HCT116 (cell line): ENCODE measurements at regions of chr2 and their contacts with region 1.

Region 1: DNA sequence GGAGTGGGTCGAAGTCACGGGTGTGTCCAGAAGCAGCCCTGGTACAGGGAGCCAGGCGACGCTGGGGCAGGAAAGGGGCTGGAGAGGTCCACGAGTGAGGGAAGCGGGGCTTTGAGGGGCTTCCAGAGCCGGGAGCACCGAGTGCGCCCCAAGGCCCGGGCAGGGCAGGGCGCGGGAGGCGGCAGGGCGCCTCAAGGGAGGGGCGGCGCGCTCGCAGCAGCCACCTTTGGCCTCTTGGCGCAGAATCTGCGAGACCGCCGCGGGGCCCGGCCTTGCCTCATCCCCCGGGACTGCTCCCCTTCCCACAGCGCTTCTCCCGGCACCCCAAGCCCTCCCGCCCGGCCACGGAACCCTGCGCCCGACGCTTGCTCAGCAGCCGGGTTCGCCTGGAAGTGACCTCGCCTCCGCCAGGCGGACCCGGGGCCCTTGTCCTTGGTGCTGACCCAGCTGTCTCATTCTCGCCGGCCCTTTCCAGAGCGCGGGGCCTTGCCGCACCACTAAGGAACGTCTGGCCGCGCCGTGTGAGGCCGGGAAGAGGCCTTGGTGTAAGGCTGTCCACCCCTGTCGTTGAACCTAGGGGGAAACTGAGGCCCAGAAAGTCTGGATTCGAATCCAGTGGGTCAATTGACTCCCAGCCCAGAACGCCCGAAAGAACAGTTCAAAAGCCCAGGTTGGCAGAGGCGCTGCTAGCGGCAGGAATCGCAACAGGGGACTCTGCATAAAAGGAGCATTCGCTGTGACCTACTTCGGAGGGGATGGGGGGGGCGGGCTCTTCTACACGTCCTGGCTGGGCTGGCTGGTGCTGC is 584 bp upstream of the DNER start:
- DNase-seq: no peak
- ATAC-seq: peak; percentile 50
- H3K4me3 ChIP-seq: peak overlapping the region; percentile 19 to 33; a peak in 3 of 4 replicates
- H3K27ac ChIP-seq: no peak overlapping the region
- H3K4me1 ChIP-seq: peaks cover 0 to 11% of the 10 kb centered on the region in 2 experiments; a peak in 2 of 4 replicates
- H3K27me3 ChIP-seq: peaks cover 25% of the 10 kb centered on the region
- CTCF ChIP-seq: no peak
- POLR2A ChIP-seq: no peak
- RAD21 ChIP-seq: no peak

Region 2: DNA sequence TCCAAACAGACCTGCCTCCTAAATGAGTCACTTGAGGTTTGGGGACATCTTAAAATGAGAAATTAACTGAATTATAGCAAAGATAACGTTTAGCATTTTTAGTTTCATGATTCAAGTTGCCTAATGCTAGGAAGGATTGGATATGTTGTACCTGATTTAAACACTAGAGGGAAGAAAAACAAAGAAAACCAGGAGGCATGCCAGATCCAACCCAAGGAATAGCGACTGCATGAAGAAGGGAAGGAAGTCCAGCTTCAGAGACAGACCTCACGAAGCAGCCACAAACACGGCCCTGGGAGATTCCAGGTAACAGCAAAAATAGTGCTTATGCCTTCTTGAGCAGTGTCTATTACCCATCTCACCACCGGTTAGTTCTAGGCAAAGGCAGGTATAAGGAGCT is 1033.5 kb before region 1 on chr2:
- CTCF ChIA-PET with region 1: no interaction called
- POLR2A ChIA-PET with region 1: no interaction called
- RAD21 ChIA-PET with region 1: no interaction called
- intact Hi-C with region 1: loop called (anchors 5 kb)
- DNase-seq: peak; percentile 34
- ATAC-seq: peak; percentile 87
- H3K4me3 ChIP-seq: no peak overlapping the region
- H3K27ac ChIP-seq: no peak overlapping the region
- H3K4me1 ChIP-seq: no peaks in the 10 kb centered on the region
- H3K27me3 ChIP-seq: no peaks in the 10 kb centered on the region
- CTCF ChIP-seq: peak; percentile 25 to 56 (median 37); a peak in 3 of 6 replicates
- POLR2A ChIP-seq: no peak
- RAD21 ChIP-seq: peak; percentile 62

Region 3: DNA sequence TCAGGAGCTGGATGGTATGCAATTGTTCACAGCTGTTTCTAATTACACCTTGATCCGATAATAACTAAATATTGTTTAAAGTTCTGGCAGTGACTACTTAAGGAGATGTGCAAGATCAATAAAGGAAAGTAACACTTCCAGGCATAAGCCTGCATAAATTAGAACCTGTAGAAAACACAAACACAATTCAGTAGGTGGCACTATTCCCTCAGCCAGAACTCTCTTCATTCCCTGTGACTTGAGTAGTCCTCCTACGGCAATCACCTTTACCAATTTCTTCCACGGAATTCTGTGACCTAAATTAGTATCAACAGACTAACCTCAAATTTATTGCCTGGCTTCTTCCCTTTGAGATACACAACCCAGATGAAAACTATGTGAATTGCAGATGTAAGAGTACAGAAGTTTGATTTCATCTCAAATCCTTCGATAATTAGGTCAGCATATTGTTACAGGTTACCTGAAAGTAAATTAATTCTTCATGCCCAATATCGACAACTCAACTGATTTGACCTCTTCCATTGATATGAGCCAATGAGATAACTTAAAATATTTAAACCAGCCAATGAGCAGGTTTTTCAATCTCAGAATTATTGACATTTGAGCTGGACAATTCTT is 581.7 kb before region 1 on chr2:
- CTCF ChIA-PET with region 1: interaction called, 3 read pairs
- POLR2A ChIA-PET with region 1: no interaction called
- RAD21 ChIA-PET with region 1: no interaction called
- intact Hi-C with region 1: loop called (anchors 2 kb)
- DNase-seq: peak; percentile 50
- ATAC-seq: peak; percentile 91
- H3K4me3 ChIP-seq: no peak overlapping the region
- H3K27ac ChIP-seq: no peak overlapping the region
- H3K4me1 ChIP-seq: no peaks in the 10 kb centered on the region
- H3K27me3 ChIP-seq: no peaks in the 10 kb centered on the region
- CTCF ChIP-seq: peak; percentile 51 to 67 (median 62)
- POLR2A ChIP-seq: no peak
- RAD21 ChIP-seq: peak; percentile 87

Region 4: DNA sequence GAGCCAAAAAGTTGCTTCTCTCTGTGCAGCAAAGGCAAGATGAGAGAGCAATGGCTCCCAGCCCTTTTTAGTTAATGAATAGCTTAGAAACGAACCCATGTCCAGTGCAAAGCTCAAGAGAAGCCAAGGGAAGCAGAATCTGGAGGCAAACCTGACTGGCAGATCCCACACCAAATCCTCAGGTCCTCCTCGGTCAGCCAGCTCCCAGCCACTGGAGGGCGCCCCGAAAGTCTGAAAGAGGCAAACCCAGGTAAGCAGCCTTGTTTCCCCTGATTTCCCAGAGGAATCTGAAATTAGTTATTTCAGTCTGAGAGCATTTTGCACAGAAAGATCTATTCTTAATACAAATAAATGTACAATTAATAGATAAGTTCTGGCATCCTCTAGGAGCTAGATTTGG is 372.6 kb before region 1 on chr2:
- CTCF ChIA-PET with region 1: interaction called, 6 read pairs
- POLR2A ChIA-PET with region 1: no interaction called
- RAD21 ChIA-PET with region 1: no interaction called
- intact Hi-C with region 1: loop called (anchors 5 kb)
- DNase-seq: peak; percentile 26
- ATAC-seq: peak; percentile 93
- H3K4me3 ChIP-seq: no peak overlapping the region
- H3K27ac ChIP-seq: no peak overlapping the region
- H3K4me1 ChIP-seq: no peaks in the 10 kb centered on the region
- H3K27me3 ChIP-seq: no peaks in the 10 kb centered on the region; the same call in 1 of the 2 replicates
- CTCF ChIP-seq: peak; percentile 73 to 85 (median 84); a peak in 5 of 6 replicates
- POLR2A ChIP-seq: no peak
- RAD21 ChIP-seq: peak; percentile 83

Region 5: DNA sequence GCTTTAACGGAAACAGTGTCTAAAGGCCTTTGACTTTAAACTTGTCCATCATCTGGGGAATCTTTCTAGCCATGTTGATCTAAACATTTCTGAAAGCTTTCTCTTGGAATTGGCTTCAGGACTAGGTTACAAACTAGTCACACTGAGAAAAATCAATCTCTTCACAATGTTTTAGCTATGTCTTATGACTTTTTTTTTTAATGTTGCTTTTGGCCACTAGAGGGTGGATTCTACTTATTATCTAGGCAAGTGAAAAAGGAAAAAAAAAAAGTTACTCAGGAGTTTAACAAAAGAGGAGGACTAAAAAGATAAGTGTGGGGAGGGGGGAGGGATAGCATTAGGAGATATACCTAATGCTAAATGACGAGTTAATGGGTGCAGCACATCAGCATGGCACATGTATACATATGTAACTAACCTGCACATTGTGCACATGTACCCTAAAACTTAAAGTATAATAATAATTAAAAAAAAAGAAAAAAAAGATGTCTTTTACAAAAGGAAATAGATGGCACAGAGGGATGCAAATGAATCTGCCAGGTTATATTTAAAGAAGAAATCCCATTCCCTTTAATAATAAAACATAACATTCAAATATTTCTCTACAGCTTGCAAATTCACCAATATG is 283.5 kb before region 1 on chr2:
- CTCF ChIA-PET with region 1: interaction called, 5 read pairs
- POLR2A ChIA-PET with region 1: no interaction called
- RAD21 ChIA-PET with region 1: interaction called in 1 of 2 experiments, 4 read pairs
- intact Hi-C with region 1: loop called (anchors 2 kb)
- DNase-seq: peak; percentile 57
- ATAC-seq: peak; percentile 68
- H3K4me3 ChIP-seq: no peak overlapping the region
- H3K27ac ChIP-seq: no peak overlapping the region
- H3K4me1 ChIP-seq: no peaks in the 10 kb centered on the region
- H3K27me3 ChIP-seq: no peaks in the 10 kb centered on the region
- CTCF ChIP-seq: peak; percentile 39 to 65 (median 61); a peak in 5 of 6 replicates
- POLR2A ChIP-seq: no peak
- RAD21 ChIP-seq: peak; percentile 72